ENCODE measurements at regions of chr1 and their contacts with region 1.

Region 1: GRCh38 chr1:168234846-168235547 is 9.2 kb downstream of the SFT2D2 start:
- DNase-seq: peak in 11 of 42 donors; percentile 13 to 68 (median 40)

Region 2: GRCh38 chr1:168335500-168335899 is 100.5 kb after region 1 on chr1:
- intact Hi-C with region 1: loop called (anchors 10 kb)
- DNase-seq: no peak

Measured in head of caudate nucleus (tissue), 42 donors.